ENCODE measurements at regions of chr1 and their contacts with region 1.

Region 1: GRCh38 chr1:33410091-33410701 is 20.7 kb downstream of the PHC2 start:
- DNase-seq: no peak
- H3K4me3 ChIP-seq: no peak overlapping the region
- H3K27ac ChIP-seq: no peak overlapping the region
- H3K4me1 ChIP-seq: no peaks in the 10 kb centered on the region
- H3K27me3 ChIP-seq: no peaks in the 10 kb centered on the region
- CTCF ChIP-seq: no peak
- EP300 ChIP-seq: no peak
- POLR2A ChIP-seq: no peak

Region 2: GRCh38 chr1:33443080-33443704 is 33.0 kb after region 1 on chr1:
- intact Hi-C with region 1: no loop called
- DNase-seq: no peak
- H3K4me3 ChIP-seq: no peak overlapping the region
- H3K27ac ChIP-seq: no peak overlapping the region
- H3K4me1 ChIP-seq: no peaks in the 10 kb centered on the region
- H3K27me3 ChIP-seq: no peaks in the 10 kb centered on the region
- CTCF ChIP-seq: no peak
- EP300 ChIP-seq: no peak
- POLR2A ChIP-seq: no peak

Region 3: DNA sequence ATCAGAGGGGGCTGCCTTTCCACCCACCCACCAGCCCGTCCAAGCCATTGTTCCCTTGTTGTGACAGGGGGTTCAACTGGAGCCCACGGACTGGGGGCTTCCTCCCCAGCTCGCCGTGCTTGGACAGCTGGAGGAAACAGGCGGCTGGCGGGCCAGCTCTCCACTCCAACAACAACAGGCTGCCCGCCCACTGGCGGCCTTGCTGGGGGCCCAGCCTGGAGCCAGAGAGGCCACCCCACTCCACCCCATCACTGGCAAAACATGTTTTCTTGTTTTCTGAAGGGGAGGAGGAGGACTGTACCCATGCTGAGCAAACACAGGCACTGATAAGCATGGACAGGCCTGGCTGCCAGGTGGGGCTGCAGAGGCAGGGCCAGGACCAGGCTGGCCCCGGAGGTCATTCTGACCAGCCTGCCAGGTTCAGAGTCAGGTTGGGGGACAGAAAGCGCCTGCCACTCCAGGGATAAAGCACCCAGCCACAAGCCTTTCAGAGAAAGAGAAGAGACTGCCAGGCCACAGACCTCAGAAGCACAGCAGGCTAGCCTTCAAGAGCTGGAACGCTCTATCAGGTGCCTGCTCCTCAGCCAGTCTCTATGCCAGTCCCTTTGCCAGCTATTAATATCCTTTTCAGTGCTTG is 1415.4 kb after region 1 on chr1:
- intact Hi-C with region 1: loop called in 1 of 4 experiments (anchors 5 kb)
- DNase-seq: peak in 1 of 5 donors; percentile 41
- H3K4me3 ChIP-seq: no peak overlapping the region
- H3K27ac ChIP-seq: no peak overlapping the region
- H3K4me1 ChIP-seq: peaks cover 7% of the 10 kb centered on the region
- H3K27me3 ChIP-seq: no peaks in the 10 kb centered on the region
- CTCF ChIP-seq: no peak
- EP300 ChIP-seq: no peak
- POLR2A ChIP-seq: no peak

Measured in ovary (tissue), 10 donors.